ENCODE measurements at regions of chr11 and their contacts with region 1.

Region 1: DNA sequence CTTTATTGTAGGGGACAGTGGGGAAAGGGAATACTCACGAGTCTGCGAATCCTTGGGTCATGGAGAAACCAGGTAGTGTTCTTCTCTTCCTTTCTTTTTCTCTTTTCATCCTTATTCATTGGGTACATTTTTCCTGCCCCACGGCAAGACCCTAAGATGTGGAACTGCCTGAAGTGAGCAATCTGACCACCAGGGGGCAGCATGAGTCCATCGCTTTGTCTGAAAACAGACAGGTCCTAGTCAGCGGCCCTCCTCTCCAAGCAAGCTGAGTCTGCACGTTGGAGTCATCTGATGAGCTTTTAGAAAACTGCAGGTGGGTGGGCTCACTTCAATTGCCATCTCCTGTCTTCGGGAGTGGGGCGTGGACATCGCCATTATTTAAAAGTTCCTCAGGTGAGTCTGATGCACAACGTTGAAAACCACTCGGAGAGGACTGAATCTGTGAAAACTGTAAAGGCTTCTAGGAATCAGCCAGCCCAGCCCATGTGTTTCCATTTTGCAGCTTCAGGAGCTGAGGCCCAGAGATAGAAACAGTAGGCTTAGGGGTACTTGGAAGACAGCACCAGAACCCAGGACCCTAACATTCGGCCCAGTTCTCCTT is 34.0 kb upstream of the FBXO3 start:
- DNase-seq: peak; percentile 37
- ATAC-seq: peak; percentile 99
- H3K4me3 ChIP-seq: no peak overlapping the region
- H3K27ac ChIP-seq: no peak overlapping the region
- H3K4me1 ChIP-seq: no peaks in the 10 kb centered on the region
- H3K27me3 ChIP-seq: peaks cover 0 to 2% of the 10 kb centered on the region in 2 experiments; a peak in 2 of 4 replicates
- CTCF ChIP-seq: peak; percentile 82 to 92 (median 83)
- EP300 ChIP-seq: no peak
- POLR2A ChIP-seq: no peak
- RAD21 ChIP-seq: peak; percentile 78

Region 2: DNA sequence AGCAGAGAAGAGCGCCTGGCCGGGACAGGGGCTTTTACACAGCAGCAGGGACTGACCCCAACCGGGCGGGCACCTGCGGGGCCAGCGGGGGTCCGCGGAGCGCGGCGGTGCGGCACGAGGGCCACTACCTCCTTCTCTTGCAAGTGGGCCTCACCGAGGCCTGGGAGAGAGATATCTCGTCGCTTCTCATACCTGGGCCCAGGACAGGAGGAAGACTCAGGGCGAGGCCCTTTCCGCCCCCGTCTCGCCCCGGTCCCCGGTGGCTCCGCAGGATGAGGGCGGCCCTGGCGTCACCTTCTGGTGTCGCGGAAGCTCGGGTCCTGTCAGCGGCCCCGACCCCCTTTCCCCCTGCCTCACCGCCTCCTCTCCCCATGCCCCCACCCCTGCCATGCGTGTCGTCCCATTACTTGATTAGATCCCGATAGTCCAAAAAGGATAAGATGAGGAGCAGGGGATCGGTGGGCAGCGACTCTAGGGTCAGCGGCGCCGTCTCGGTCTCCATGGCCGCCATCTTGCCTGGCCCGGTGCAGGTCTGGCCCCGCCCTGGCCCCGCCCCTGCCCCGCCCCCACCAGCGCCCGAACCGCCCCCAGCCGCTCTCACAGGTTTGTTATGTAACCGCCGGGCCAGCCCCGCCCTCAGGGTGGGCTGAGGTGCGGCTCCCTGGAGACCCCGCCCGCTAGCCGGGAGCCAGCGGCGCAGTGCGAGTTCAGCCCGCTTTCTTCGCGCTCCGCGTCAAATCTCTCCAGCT is 34.2 kb before region 1 on chr11 and contains the start of gene FBXO3:
- CTCF ChIA-PET with region 1: interaction called, 16 read pairs
- POLR2A ChIA-PET with region 1: interaction called, 3 read pairs
- RAD21 ChIA-PET with region 1: interaction called, 3 read pairs
- SMC1A ChIA-PET with region 1: interaction called, 5 read pairs
- in situ Hi-C with region 1: no loop called
- intact Hi-C with region 1: no loop called
- DNase-seq: no peak
- ATAC-seq: peak; percentile 88
- H3K4me3 ChIP-seq: peak within 1 kb of the TSS; percentile 96
- H3K27ac ChIP-seq: peak within 1 kb of the TSS; percentile 26; the same call in 1 of the 2 replicates
- H3K4me1 ChIP-seq: peaks cover 21% of the 10 kb centered on the region
- H3K27me3 ChIP-seq: no peaks in the 10 kb centered on the region
- CTCF ChIP-seq: no peak
- EP300 ChIP-seq: no peak
- POLR2A ChIP-seq: peak; percentile 85
- RAD21 ChIP-seq: no peak
- polyA plus RNA-seq, gene FBXO3: 12.4 to 27.1 TPM

Region 3: GRCh38 chr11:33819278-33819677 is 10.9 kb after region 1 on chr11:
- CTCF ChIA-PET with region 1: interaction called, 153 read pairs
- POLR2A ChIA-PET with region 1: interaction called, 3 read pairs
- RAD21 ChIA-PET with region 1: interaction called, 3 read pairs
- SMC1A ChIA-PET with region 1: interaction called, 3 read pairs
- in situ Hi-C with region 1: no loop called
- intact Hi-C with region 1: no loop called
- DNase-seq: no peak
- ATAC-seq: no peak
- H3K4me3 ChIP-seq: no peak overlapping the region
- H3K27ac ChIP-seq: no peak overlapping the region
- H3K4me1 ChIP-seq: no peaks in the 10 kb centered on the region
- H3K27me3 ChIP-seq: peaks cover 3 to 6% of the 10 kb centered on the region in 2 experiments; a peak in 3 of 4 replicates
- CTCF ChIP-seq: no peak
- EP300 ChIP-seq: no peak
- POLR2A ChIP-seq: no peak
- RAD21 ChIP-seq: no peak

Region 4: DNA sequence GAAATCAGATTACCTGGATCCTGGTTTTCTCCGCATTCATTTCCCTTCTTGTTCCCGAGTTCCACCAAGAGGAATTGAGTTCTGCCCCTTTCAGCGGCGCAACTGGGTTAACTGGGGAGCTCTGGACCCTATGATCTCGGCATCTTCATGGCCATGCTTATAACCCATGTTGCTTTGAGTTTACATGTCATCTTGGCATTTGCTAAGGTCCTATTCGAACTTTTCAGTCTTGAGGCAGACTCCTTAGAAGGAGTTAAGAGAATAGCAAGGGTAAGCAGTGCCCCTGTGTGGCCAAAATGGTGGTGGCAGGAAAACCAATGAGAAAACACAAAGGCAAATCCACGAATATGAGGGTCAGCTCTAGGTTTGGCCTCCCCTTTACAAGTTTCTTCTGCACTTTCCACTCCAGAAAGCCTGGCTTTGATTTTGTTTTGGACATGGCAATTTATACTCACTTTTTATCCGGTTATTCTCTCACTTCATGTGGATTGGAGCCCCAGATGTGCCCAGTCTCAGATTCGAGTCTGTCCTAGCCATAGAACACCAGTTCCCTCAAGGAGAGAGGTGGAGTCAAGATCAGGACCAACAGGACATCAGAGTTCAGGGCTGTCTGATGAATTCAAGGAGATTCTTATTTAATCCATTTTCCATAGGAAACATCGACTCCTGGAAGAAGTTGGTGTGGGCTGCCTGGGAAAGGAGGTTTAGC is 21.3 kb after region 1 on chr11:
- CTCF ChIA-PET with region 1: interaction called, 153 read pairs
- POLR2A ChIA-PET with region 1: no interaction called
- RAD21 ChIA-PET with region 1: interaction called, 54 read pairs
- SMC1A ChIA-PET with region 1: interaction called, 25 read pairs
- in situ Hi-C with region 1: no loop called
- intact Hi-C with region 1: loop called (anchors 1 kb)
- DNase-seq: peak; percentile 28
- ATAC-seq: peak; percentile 96
- H3K4me3 ChIP-seq: no peak overlapping the region; the same call in 1 of the 2 replicates
- H3K27ac ChIP-seq: no peak overlapping the region
- H3K4me1 ChIP-seq: peaks cover 4% of the 10 kb centered on the region; the same call in 1 of the 2 replicates
- H3K27me3 ChIP-seq: peaks cover 10 to 12% of the 10 kb centered on the region in 2 experiments; a peak in 3 of 4 replicates
- CTCF ChIP-seq: peak; percentile 78 to 89 (median 87)
- EP300 ChIP-seq: no peak
- POLR2A ChIP-seq: no peak
- RAD21 ChIP-seq: peak; percentile 95

Measured in GM12878 (cell line).